ENCODE measurements at regions of chr17 and their contacts with region 1.

Region 1: DNA sequence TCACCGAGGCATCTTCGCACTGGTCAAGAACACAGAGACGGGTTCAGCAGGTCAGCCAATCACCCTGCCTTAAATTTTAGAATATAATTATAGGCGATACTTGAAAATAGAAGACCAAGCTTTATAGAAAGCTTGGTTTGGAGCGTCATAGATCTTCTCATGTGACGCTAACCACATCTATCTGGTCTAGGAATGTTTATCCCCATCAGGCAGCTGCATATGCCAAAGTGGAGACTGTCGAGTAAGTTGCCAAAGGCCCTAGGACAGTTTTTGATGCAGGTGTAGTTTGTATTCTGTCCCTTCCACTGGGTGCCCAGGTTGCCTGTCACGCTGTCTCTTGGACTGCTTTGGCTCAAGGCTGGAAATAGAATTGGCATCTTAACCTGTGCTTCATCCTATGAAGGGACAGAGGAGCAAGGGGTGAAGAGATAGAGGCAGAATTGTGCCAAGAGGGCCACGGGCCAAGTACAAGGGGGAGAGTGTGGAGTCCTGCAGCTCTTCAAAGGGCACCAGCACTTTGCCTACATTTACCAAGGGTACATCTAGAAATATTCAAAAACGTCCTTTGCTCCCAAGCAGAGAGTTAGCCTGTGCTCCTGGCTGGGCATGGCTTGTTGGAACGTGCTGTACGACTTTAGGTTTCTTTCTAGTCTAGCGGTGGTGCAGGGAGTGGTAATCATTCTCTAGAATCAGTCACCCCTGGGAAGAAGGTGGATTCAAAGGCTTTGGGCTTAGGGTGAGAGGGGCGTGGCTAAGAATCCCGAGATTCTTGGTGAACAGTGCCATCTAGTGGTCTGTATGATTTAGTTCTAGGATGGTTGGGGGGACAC is 5.3 kb upstream of the WIPI1 start:
- DNase-seq: peak; percentile 66 to 86 (median 75)
- H3K4me3 ChIP-seq: no peak overlapping the region
- H3K27ac ChIP-seq: peak overlapping the region in 1 of 5 donors; percentile 54
- H3K4me1 ChIP-seq: peaks cover 0 to 39% of the 10 kb centered on the region in 2 donors
- H3K27me3 ChIP-seq: no peaks in the 10 kb centered on the region
- CTCF ChIP-seq: peak; percentile 66 to 85 (median 73)
- POLR2A ChIP-seq: no peak

Region 2: GRCh38 chr17:68172461-68172954 is 290.1 kb before region 1 on chr17:
- intact Hi-C with region 1: loop called in 1 of 2 experiments (anchors 5 kb)
- DNase-seq: peak; percentile 55 to 88 (median 75)
- H3K4me3 ChIP-seq: peak overlapping the region in 1 of 4 donors; percentile 6
- H3K27ac ChIP-seq: no peak overlapping the region
- H3K4me1 ChIP-seq: no peaks in the 10 kb centered on the region
- H3K27me3 ChIP-seq: no peaks in the 10 kb centered on the region
- CTCF ChIP-seq: peak; percentile 93 to 99 (median 96)
- POLR2A ChIP-seq: no peak

Region 3: GRCh38 chr17:68260051-68260762 is 202.4 kb before region 1 on chr17:
- intact Hi-C with region 1: loop called in 1 of 2 experiments (anchors 5 kb)
- DNase-seq: no peak
- H3K4me3 ChIP-seq: no peak overlapping the region
- H3K27ac ChIP-seq: no peak overlapping the region
- H3K4me1 ChIP-seq: peaks cover 0 to 12% of the 10 kb centered on the region in 2 donors
- H3K27me3 ChIP-seq: no peaks in the 10 kb centered on the region
- CTCF ChIP-seq: no peak
- POLR2A ChIP-seq: no peak

Region 4: DNA sequence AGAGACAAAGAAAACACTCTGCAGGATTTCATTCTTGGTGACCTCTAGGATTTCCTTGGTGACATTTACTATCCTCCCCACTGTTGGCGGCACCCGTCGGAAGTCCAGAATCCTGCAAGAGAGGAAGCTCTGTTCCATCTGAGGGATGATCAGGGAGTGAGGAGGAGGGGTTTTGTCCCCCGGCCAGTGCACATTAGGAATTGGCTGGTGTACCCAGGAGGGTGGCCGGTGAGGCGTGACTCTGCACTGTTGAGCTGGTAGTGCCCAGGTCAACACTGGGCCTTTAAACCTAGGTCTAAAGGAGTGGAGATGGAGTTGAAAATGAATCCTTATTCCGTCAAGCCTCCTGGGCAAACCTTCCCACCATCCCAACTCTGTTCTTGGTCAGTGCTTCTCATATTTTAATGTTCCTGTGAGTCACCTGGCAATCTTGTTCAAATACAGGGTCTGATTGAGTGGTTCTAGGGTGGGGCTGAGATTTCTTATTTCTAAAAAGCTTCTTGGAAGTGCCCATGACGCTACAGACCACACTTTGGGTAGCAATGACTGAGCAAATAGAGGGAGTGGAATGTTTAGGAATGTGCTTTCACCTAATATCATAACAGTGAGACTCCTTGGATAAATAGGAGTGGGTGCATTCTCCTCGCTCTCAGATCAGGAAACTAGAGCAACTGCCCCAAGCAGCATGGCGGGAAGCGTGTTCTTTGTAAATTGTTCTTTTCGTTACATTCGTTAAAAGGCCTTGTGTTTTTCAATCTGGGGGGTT is 80.3 kb after region 1 on chr17:
- intact Hi-C with region 1: no loop called
- DNase-seq: no peak
- H3K4me3 ChIP-seq: no peak overlapping the region
- H3K27ac ChIP-seq: no peak overlapping the region
- H3K4me1 ChIP-seq: no peaks in the 10 kb centered on the region
- H3K27me3 ChIP-seq: no peaks in the 10 kb centered on the region
- CTCF ChIP-seq: no peak
- POLR2A ChIP-seq: no peak

Region 5: DNA sequence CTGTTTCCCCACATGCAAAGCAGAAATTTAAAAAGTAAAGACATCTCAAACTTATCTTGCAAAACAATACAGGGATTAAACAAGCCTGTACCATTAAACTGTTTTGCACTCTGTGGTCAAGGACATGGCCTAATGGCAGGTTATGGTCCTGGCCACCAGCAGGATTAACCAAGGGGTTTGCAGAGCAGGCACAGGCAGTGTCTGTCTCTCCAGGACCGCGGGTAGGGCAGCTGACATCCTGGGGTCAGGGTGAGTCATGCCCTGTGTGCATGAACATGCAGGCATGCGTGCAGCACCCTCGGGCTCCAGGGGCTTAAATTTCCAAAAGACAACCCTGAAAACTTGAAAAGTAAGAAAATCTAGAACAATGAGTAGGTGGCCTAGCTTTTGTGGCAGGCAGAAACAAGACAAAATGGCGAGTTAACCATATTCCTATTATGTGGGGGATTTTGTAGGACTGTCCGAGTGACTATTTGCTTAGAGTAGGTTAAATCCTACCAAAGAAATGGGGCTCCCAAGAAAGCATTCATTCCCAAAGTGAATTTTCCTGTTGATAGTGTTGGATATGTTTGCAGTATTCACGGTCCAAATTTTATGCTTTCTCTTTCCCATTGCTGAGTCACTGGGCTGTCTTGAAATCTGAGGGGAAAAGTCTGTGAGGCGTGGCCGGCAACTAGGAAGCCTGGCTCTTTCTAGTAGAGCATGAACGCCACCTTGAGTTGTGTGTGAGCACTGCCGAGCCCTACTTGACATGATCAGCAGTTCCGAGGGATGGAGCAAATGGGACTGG is 296.9 kb after region 1 on chr17:
- intact Hi-C with region 1: loop called in 1 of 2 experiments (anchors 10 kb)
- DNase-seq: peak; percentile 86 to 98 (median 95)
- H3K4me3 ChIP-seq: peak overlapping the region in 2 of 4 donors; percentile 20 to 57
- H3K27ac ChIP-seq: peak overlapping the region; percentile 28 to 94 (median 89)
- H3K4me1 ChIP-seq: peaks cover 0 to 8% of the 10 kb centered on the region in 2 donors
- H3K27me3 ChIP-seq: no peaks in the 10 kb centered on the region
- CTCF ChIP-seq: peak; percentile 75 to 97 (median 94)
- POLR2A ChIP-seq: peak in 1 of 2 donors; percentile 44